ENCODE measurements at regions of chr14 and their contacts with region 1.

Region 1: GRCh38 chr14:65164068-65164824 is 61.9 kb upstream of the MAX start:
- DNase-seq: peak; percentile 58
- H3K4me3 ChIP-seq: no peak overlapping the region
- H3K27ac ChIP-seq: no peak overlapping the region
- H3K4me1 ChIP-seq: no peaks in the 10 kb centered on the region
- H3K27me3 ChIP-seq: no peaks in the 10 kb centered on the region
- CTCF ChIP-seq: peak; percentile 36 to 41
- POLR2A ChIP-seq: no peak

Region 2: GRCh38 chr14:64178814-64179213 is 985.4 kb before region 1 on chr14:
- CTCF ChIA-PET with region 1: no interaction called
- POLR2A ChIA-PET with region 1: no interaction called
- dilution Hi-C with region 1: no loop called
- intact Hi-C with region 1: no loop called
- DNase-seq: no peak
- H3K4me3 ChIP-seq: no peak overlapping the region
- H3K27ac ChIP-seq: no peak overlapping the region
- H3K4me1 ChIP-seq: no peaks in the 10 kb centered on the region
- H3K27me3 ChIP-seq: no peaks in the 10 kb centered on the region
- CTCF ChIP-seq: no peak
- POLR2A ChIP-seq: no peak

Region 3: GRCh38 chr14:65222440-65222858 is 58.2 kb after region 1 on chr14:
- CTCF ChIA-PET with region 1: no interaction called
- POLR2A ChIA-PET with region 1: no interaction called
- dilution Hi-C with region 1: no loop called
- intact Hi-C with region 1: loop called (anchors 1 kb)
- DNase-seq: peak; percentile 80
- H3K4me3 ChIP-seq: no peak overlapping the region
- H3K27ac ChIP-seq: no peak overlapping the region
- H3K4me1 ChIP-seq: peaks cover 4% of the 10 kb centered on the region
- H3K27me3 ChIP-seq: no peaks in the 10 kb centered on the region
- CTCF ChIP-seq: peak; percentile 82
- POLR2A ChIP-seq: no peak

Region 4: DNA sequence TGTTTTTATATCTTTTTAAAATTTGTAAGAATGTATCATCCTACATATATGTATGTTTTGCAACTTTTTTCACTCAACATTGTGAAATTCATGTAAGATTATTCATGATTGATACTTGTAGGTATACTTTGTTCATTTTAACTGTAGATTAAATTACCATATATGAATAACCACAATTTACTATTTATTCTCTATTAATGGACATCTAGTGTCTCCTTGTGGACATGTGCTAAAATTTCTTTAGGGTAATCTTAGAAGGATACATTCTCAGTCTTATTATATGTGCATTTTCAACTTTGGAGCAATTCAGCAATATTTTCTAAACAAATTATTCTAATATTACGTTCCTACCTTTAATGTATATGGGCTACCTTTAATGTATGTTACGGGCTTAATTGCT is 440.7 kb after region 1 on chr14:
- CTCF ChIA-PET with region 1: no interaction called
- POLR2A ChIA-PET with region 1: no interaction called
- dilution Hi-C with region 1: no loop called
- intact Hi-C with region 1: loop called (anchors 1 kb)
- DNase-seq: peak; percentile 15
- H3K4me3 ChIP-seq: no peak overlapping the region
- H3K27ac ChIP-seq: no peak overlapping the region
- H3K4me1 ChIP-seq: no peaks in the 10 kb centered on the region
- H3K27me3 ChIP-seq: no peaks in the 10 kb centered on the region
- CTCF ChIP-seq: no peak
- POLR2A ChIP-seq: no peak

Region 5: GRCh38 chr14:65958664-65959562 is 794.7 kb after region 1 on chr14:
- CTCF ChIA-PET with region 1: interaction called, 146 read pairs
- POLR2A ChIA-PET with region 1: no interaction called
- dilution Hi-C with region 1: no loop called
- intact Hi-C with region 1: loop called (anchors 1 kb)
- DNase-seq: peak; percentile 35
- H3K4me3 ChIP-seq: no peak overlapping the region
- H3K27ac ChIP-seq: no peak overlapping the region
- H3K4me1 ChIP-seq: no peaks in the 10 kb centered on the region
- H3K27me3 ChIP-seq: no peaks in the 10 kb centered on the region
- CTCF ChIP-seq: peak; percentile 5 to 16
- POLR2A ChIP-seq: no peak

Region 6: GRCh38 chr14:66359500-66359899 is 1195.3 kb after region 1 on chr14:
- CTCF ChIA-PET with region 1: interaction called, 4 read pairs
- POLR2A ChIA-PET with region 1: no interaction called
- dilution Hi-C with region 1: no loop called
- intact Hi-C with region 1: loop called (anchors 5 kb)
- DNase-seq: peak; percentile 48
- H3K4me3 ChIP-seq: no peak overlapping the region
- H3K27ac ChIP-seq: no peak overlapping the region
- H3K4me1 ChIP-seq: no peaks in the 10 kb centered on the region
- H3K27me3 ChIP-seq: peaks cover 0 to 16% of the 10 kb centered on the region in 2 experiments
- CTCF ChIP-seq: peak; percentile 32 to 37
- POLR2A ChIP-seq: no peak

Measured in endothelial cell of umbilical vein (primary cell).